A673 (cell line): ENCODE measurements at regions of chr5 and their contacts with region 1.

Region 1: DNA sequence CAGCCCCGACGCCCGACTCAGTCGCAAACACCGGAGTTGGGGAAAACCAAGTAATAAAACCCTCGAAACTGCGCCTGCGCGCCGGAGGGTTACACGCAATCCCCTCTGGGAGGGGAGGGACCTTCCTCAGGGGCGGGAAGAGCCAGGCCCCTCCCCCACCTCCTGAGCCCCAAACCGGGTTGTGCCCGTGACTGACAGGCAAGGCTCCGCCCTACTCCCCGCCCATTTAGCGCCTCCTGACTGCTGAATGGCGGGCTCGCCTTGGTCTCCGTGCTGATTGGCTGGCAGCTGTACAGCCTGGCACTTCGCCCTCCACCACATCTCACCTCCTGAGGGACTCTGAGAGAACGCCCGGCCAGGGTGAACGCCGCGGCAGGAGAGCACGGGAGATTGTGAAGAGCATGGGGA is at the start of gene PRDM9:
- DNase-seq: peak; percentile 31
- H3K4me3 ChIP-seq: no peak within 1 kb of the TSS
- H3K27ac ChIP-seq: no peak within 1 kb of the TSS
- H3K4me1 ChIP-seq: no peaks in the 10 kb centered on the region
- H3K27me3 ChIP-seq: no peaks in the 10 kb centered on the region
- CTCF ChIP-seq: no peak
- total RNA-seq, gene PRDM9: not detected in 2 replicates

Region 2: GRCh38 chr5:22734910-22735309 is 772.4 kb before region 1 on chr5:
- CTCF ChIA-PET with region 1: no interaction called
- POLR2A ChIA-PET with region 1: no interaction called
- intact Hi-C with region 1: no loop called
- DNase-seq: no peak
- H3K4me3 ChIP-seq: no peak overlapping the region
- H3K27ac ChIP-seq: no peak overlapping the region
- H3K4me1 ChIP-seq: no peaks in the 10 kb centered on the region
- H3K27me3 ChIP-seq: no peaks in the 10 kb centered on the region
- CTCF ChIP-seq: no peak

Region 3: GRCh38 chr5:23208959-23209431 is 298.3 kb before region 1 on chr5:
- CTCF ChIA-PET with region 1: no interaction called
- POLR2A ChIA-PET with region 1: no interaction called
- intact Hi-C with region 1: loop called (anchors 10 kb)
- DNase-seq: peak; percentile 81
- H3K4me3 ChIP-seq: no peak overlapping the region
- H3K27ac ChIP-seq: no peak overlapping the region
- H3K4me1 ChIP-seq: no peaks in the 10 kb centered on the region
- H3K27me3 ChIP-seq: no peaks in the 10 kb centered on the region
- CTCF ChIP-seq: peak; percentile 84

Region 4: GRCh38 chr5:23257656-23258055 is 249.6 kb before region 1 on chr5:
- CTCF ChIA-PET with region 1: no interaction called
- POLR2A ChIA-PET with region 1: no interaction called
- intact Hi-C with region 1: no loop called
- DNase-seq: no peak
- H3K4me3 ChIP-seq: no peak overlapping the region
- H3K27ac ChIP-seq: no peak overlapping the region
- H3K4me1 ChIP-seq: no peaks in the 10 kb centered on the region
- H3K27me3 ChIP-seq: no peaks in the 10 kb centered on the region
- CTCF ChIP-seq: no peak